ENCODE measurements at regions of chr1 and their contacts with region 1.

Region 1: DNA sequence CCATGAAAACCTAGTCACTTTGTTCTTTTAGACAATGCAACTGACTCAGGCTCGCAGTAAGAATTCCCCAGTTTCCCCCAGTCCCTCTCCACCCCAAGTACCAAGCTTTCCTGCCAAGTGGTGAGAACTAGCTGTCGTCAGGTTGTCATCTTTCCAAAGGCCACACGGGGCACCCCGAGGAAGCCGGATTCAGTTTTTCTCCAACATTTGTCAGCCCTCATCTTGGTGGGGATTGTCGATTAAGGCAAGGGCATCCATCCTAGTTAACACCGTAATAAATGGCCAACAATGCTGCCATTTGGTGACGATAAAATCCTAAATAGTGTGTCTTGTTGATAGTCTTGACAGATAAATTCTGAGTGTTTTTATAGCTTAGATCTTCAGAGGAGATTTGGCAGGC is 55.9 kb upstream of the PROX1 start:
- DNase-seq: peak; percentile 37
- ATAC-seq: peak; percentile 96
- H3K4me3 Mint-ChIP-seq: no peak overlapping the region
- H3K27ac Mint-ChIP-seq: no peak overlapping the region
- H3K4me1 Mint-ChIP-seq: no peaks in the 10 kb centered on the region
- H3K27me3 Mint-ChIP-seq: no peaks in the 10 kb centered on the region
- CTCF ChIP-seq: no peak

Region 2: GRCh38 chr1:213947200-213947775 is 15.5 kb after region 1 on chr1:
- CTCF ChIA-PET with region 1: no interaction called
- POLR2A ChIA-PET with region 1: no interaction called
- DNase-seq: no peak
- ATAC-seq: peak; percentile 59
- H3K4me3 Mint-ChIP-seq: no peak overlapping the region
- H3K27ac Mint-ChIP-seq: no peak overlapping the region
- H3K4me1 Mint-ChIP-seq: peaks cover 12% of the 10 kb centered on the region
- H3K27me3 Mint-ChIP-seq: peaks cover 22% of the 10 kb centered on the region
- CTCF ChIP-seq: no peak

Region 3: GRCh38 chr1:213979751-213980586 is 48.1 kb after region 1 on chr1:
- CTCF ChIA-PET with region 1: interaction called, 13 read pairs
- POLR2A ChIA-PET with region 1: no interaction called
- DNase-seq: peak; percentile 63
- ATAC-seq: peak; percentile 67
- H3K4me3 Mint-ChIP-seq: peak overlapping the region; percentile 80
- H3K27ac Mint-ChIP-seq: no peak overlapping the region
- H3K4me1 Mint-ChIP-seq: peaks cover 65% of the 10 kb centered on the region
- H3K27me3 Mint-ChIP-seq: peaks cover 95% of the 10 kb centered on the region
- CTCF ChIP-seq: no peak

Measured in WTC11 (cell line).